ENCODE measurements at regions of chr10 and their contacts with region 1.

Region 1: DNA sequence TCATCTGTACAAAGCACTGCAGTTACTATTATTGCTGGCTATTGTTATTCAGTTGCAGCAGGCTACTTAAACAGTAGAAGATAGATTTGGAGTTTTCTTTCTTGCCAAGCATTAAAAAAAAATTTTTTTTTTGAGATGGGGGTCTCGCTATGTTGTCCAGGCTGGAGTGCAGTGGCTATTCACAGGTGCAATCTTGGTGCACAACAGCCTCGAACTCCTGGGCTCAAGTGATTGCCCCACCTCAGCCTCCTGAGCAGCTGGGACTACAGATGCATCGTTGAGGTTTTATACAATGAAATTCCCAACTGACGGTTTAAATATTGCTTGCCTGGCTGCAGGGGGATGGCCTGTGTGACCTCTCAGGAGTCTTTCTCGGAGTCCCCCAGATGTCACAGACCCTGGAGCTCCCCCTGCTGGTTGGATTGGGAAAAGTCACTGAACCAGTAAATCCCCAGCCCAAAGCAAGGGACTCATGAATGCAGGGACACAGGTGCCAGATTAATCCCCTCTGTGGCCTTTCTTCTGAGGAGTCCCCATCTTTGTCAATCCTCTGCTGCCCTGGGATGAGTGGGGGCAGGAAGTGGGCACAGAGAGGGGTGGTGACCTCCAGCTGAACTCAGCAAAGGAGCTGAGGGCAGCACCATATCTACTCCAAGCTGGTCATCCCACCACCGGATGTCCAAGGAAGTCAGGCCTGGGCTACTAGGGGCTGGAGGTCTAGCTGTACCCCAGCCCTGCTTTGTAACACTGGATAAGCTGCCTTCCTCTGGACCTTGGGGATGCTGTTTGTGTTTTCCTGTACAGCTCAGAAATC is 149.6 kb downstream of the C10orf105 start:
- DNase-seq: peak; percentile 64 to 87 (median 75)
- ATAC-seq: no peak
- H3K4me3 ChIP-seq: no peak overlapping the region
- H3K4me3 Mint-ChIP-seq: no peak overlapping the region
- H3K27ac ChIP-seq: no peak overlapping the region
- H3K27ac Mint-ChIP-seq: no peak overlapping the region
- H3K4me1 ChIP-seq: no peaks in the 10 kb centered on the region
- H3K4me1 Mint-ChIP-seq: no peaks in the 10 kb centered on the region
- H3K27me3 ChIP-seq: no peaks in the 10 kb centered on the region
- H3K27me3 Mint-ChIP-seq: no peaks in the 10 kb centered on the region
- CTCF ChIP-seq: peak; percentile 85

Region 2: GRCh38 chr10:71319042-71319799 is 250.8 kb before region 1 on chr10 and contains the start of gene SLC29A3:
- CTCF ChIA-PET with region 1: interaction called, 102 read pairs
- POLR2A ChIA-PET with region 1: interaction called, 6 read pairs
- intact Hi-C with region 1: loop called (anchors 1 kb)
- DNase-seq: peak; percentile 69 to 92 (median 80)
- ATAC-seq: peak; percentile 87
- H3K4me3 ChIP-seq: peak within 1 kb of the TSS; percentile 83 to 91
- H3K4me3 Mint-ChIP-seq: peak within 1 kb of the TSS; percentile 92
- H3K27ac ChIP-seq: peak within 1 kb of the TSS; percentile 58 to 61
- H3K27ac Mint-ChIP-seq: peak within 1 kb of the TSS; percentile 80
- H3K4me1 ChIP-seq: peaks cover 18% of the 10 kb centered on the region
- H3K4me1 Mint-ChIP-seq: peaks cover 45% of the 10 kb centered on the region
- H3K27me3 ChIP-seq: no peaks in the 10 kb centered on the region
- H3K27me3 Mint-ChIP-seq: no peaks in the 10 kb centered on the region
- CTCF ChIP-seq: peak; percentile 38
- total RNA-seq, gene SLC29A3: 1.4 to 2.9 TPM

Region 3: DNA sequence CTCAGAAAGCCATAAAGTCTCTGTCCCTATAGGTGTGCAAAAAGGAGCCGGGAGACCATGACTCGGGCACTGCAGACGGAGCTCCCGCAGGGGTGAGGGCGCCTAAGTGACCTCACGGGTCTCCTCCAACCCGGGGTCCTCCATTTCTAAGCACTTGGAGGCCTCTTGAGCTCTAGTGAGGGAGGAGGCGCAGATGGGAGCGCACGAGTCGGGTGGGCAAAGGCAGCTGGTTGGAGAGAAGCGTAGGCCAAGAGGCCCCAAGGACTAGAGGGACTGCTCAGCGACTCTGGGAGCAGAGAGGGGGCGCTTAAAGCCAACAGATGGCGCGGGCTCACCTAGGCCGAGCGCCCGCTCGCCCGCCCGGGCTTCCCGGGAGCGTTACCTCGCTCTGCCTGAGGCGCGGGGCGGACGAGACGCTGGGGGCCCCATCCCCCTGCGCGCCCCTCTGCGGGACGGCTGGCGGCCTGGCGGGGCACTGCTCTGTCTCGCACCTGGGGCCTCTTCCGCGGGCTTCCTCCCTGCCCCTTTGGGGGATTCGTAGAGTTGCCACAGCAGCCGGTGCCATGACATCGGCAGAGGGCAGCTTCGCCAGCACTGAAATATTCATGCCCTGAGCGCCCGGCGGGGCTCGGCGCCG is 173.8 kb before region 1 on chr10:
- CTCF ChIA-PET with region 1: interaction called, 10 read pairs
- POLR2A ChIA-PET with region 1: no interaction called
- intact Hi-C with region 1: no loop called
- DNase-seq: peak in 5 of 9 experiments; percentile 24 to 63 (median 54)
- ATAC-seq: peak; percentile 64
- H3K4me3 ChIP-seq: peak overlapping the region; percentile 32 to 39
- H3K4me3 Mint-ChIP-seq: peak overlapping the region; percentile 72
- H3K27ac ChIP-seq: no peak overlapping the region
- H3K27ac Mint-ChIP-seq: no peak overlapping the region
- H3K4me1 ChIP-seq: peaks cover 14% of the 10 kb centered on the region
- H3K4me1 Mint-ChIP-seq: peaks cover 8% of the 10 kb centered on the region
- H3K27me3 ChIP-seq: peaks cover 15 to 18% of the 10 kb centered on the region in 2 experiments
- H3K27me3 Mint-ChIP-seq: peaks cover 56% of the 10 kb centered on the region
- CTCF ChIP-seq: no peak

Region 4: GRCh38 chr10:71558991-71559390 is 11.0 kb before region 1 on chr10:
- CTCF ChIA-PET with region 1: interaction called, 16 read pairs
- POLR2A ChIA-PET with region 1: no interaction called
- intact Hi-C with region 1: no loop called
- DNase-seq: no peak
- ATAC-seq: no peak
- H3K4me3 ChIP-seq: no peak overlapping the region
- H3K4me3 Mint-ChIP-seq: no peak overlapping the region
- H3K27ac ChIP-seq: no peak overlapping the region
- H3K27ac Mint-ChIP-seq: no peak overlapping the region
- H3K4me1 ChIP-seq: no peaks in the 10 kb centered on the region
- H3K4me1 Mint-ChIP-seq: no peaks in the 10 kb centered on the region
- H3K27me3 ChIP-seq: no peaks in the 10 kb centered on the region
- H3K27me3 Mint-ChIP-seq: peaks cover 21% of the 10 kb centered on the region
- CTCF ChIP-seq: no peak

Region 5: GRCh38 chr10:71659111-71659634 is 89.2 kb after region 1 on chr10:
- CTCF ChIA-PET with region 1: no interaction called
- POLR2A ChIA-PET with region 1: no interaction called
- intact Hi-C with region 1: no loop called
- DNase-seq: no peak
- ATAC-seq: no peak
- H3K4me3 ChIP-seq: no peak overlapping the region
- H3K4me3 Mint-ChIP-seq: no peak overlapping the region
- H3K27ac ChIP-seq: no peak overlapping the region
- H3K27ac Mint-ChIP-seq: no peak overlapping the region
- H3K4me1 ChIP-seq: no peaks in the 10 kb centered on the region
- H3K4me1 Mint-ChIP-seq: peaks cover 2% of the 10 kb centered on the region
- H3K27me3 ChIP-seq: no peaks in the 10 kb centered on the region
- H3K27me3 Mint-ChIP-seq: no peaks in the 10 kb centered on the region
- CTCF ChIP-seq: no peak

Region 6: DNA sequence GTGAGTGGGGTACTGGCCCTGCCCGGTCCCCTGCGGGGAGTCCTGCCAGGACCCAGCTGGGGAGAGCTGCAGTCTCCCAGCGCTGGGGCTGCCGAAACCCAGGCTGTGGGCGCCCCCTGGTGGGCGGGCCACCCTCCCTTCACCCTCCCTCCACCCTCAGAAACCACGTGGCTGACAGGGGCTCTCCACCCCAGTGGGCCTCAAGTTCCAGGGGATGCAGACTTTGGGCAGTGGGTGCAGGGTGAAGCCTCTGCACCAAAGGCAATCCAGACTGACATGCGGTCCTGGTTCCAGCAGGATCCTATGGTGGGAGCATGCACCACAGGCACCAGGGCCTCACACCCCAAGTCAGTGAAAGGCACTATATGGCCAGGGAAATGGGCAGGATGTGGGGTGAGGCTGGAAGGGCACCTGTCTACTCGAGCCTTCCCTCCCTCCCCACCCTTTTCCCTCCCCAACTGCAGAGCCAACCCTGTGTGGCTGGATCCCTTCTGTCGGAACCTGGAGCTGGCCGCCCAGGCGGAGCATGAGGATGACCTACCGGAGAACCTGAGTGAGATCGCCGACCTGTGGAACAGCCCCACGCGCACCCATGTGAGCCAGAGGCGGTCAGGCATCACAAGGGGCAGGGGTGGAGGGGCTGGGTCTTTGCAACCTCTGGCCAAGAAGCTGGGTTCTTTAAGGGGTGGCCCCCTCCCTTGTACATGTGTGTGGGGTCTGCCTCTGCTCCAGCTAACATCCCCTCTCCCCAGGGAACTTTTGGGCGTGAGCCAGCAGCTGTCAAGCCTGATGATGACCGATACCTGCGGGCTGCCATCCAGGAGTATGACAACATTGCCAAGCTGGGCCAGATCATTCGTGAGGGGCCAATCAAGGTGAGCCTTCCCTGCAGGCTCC is 242.3 kb after region 1 on chr10:
- CTCF ChIA-PET with region 1: interaction called, 4 read pairs
- POLR2A ChIA-PET with region 1: no interaction called
- intact Hi-C with region 1: loop called (anchors 5 kb)
- DNase-seq: peak; percentile 63 to 91 (median 79)
- ATAC-seq: peak; percentile 91
- H3K4me3 ChIP-seq: no peak overlapping the region
- H3K4me3 Mint-ChIP-seq: no peak overlapping the region
- H3K27ac ChIP-seq: no peak overlapping the region
- H3K27ac Mint-ChIP-seq: no peak overlapping the region
- H3K4me1 ChIP-seq: peaks cover 4% of the 10 kb centered on the region
- H3K4me1 Mint-ChIP-seq: peaks cover 2% of the 10 kb centered on the region
- H3K27me3 ChIP-seq: no peaks in the 10 kb centered on the region
- H3K27me3 Mint-ChIP-seq: no peaks in the 10 kb centered on the region
- CTCF ChIP-seq: peak; percentile 79